ENCODE measurements at regions of chr16 and their contacts with region 1.

Region 1: GRCh38 chr16:15643048-15643945 is at the start of gene MARF1:
- DNase-seq: peak; percentile 99
- ATAC-seq: peak; percentile 94 to 99 (median 99)
- H3K4me3 ChIP-seq: peak within 1 kb of the TSS; percentile 69 to 97 (median 82)
- H3K27ac ChIP-seq: peak within 1 kb of the TSS; percentile 97 to 100 (median 99)
- H3K4me1 ChIP-seq: peaks cover 6 to 46% (median 20%) of the 10 kb centered on the region in 12 donors
- H3K27me3 ChIP-seq: no peaks in the 10 kb centered on the region
- CTCF ChIP-seq: peak; percentile 23 to 71 (median 45)
- POLR2A ChIP-seq: peak; percentile 67 to 95
- total RNA-seq, gene MARF1: 24.1 to 61.3 (median 43.1) TPM

Region 2: DNA sequence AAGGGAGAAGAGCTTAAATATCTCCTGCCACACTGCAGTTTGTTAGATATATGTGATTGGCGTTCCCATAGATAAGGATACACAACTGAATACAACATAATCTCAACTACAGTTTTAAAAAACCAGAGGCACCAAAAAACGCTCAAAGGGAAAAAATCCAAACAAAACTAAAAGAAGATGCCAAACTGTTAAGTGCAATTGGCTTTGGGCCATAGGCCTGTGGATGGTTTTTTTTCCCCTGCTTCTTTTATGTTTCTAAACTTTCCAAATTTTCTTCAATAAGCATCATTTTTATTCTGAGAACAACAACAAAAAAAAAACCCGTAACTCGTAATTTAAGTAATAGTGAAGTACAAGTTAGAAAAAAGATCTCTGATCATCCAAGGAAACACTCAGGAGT is 22.5 kb before region 1 on chr16:
- intact Hi-C with region 1: loop called in 1 of 10 experiments (anchors 2 kb)
- DNase-seq: no peak
- ATAC-seq: no peak
- H3K4me3 ChIP-seq: no peak overlapping the region
- H3K27ac ChIP-seq: peak overlapping the region in 11 of 12 donors; percentile 2 to 80 (median 58)
- H3K4me1 ChIP-seq: peaks cover 0 to 21% (median 13%) of the 10 kb centered on the region in 12 donors
- H3K27me3 ChIP-seq: no peaks in the 10 kb centered on the region
- CTCF ChIP-seq: no peak
- POLR2A ChIP-seq: no peak

Region 3: GRCh38 chr16:15672514-15673167 is 29.3 kb after region 1 on chr16:
- intact Hi-C with region 1: loop called in 4 of 10 experiments (anchors 1 to 2 kb)
- DNase-seq: peak; percentile 89 to 93 (median 90)
- ATAC-seq: peak; percentile 94 to 98 (median 98)
- H3K4me3 ChIP-seq: peak overlapping the region in 9 of 12 donors; percentile 4 to 41 (median 28)
- H3K27ac ChIP-seq: peak overlapping the region; percentile 72 to 97 (median 88)
- H3K4me1 ChIP-seq: peaks cover 0 to 38% (median 18%) of the 10 kb centered on the region in 12 donors
- H3K27me3 ChIP-seq: no peaks in the 10 kb centered on the region
- CTCF ChIP-seq: no peak
- POLR2A ChIP-seq: peak in 1 of 2 donors; percentile 53

Region 4: DNA sequence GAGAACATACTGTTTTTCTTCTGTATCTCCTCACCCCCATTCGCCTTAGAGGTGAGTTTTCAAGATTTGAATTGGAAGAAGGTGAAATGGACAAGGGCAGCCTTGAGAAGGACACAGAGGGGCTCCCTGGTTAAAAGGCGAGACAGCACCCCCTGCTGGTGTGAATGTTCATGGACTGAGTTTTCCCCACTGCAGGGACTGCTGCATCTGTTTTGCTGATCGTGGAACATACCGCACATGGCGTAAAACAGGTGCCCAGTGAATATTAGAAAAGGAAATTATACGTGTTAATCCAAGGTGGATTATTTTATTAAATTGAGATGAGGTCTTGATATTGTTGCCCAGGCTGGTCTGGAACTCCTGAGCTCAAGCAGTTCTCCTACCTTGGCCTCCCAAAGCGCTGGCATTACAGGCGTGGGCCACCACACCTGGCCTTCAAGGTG is 61.3 kb after region 1 on chr16:
- intact Hi-C with region 1: loop called in 5 of 10 experiments (anchors 2 to 10 kb)
- DNase-seq: peak; percentile 71 to 81 (median 73)
- ATAC-seq: peak; percentile 50 to 90 (median 82)
- H3K4me3 ChIP-seq: no peak overlapping the region
- H3K27ac ChIP-seq: peak overlapping the region in 1 of 12 donors; percentile 38
- H3K4me1 ChIP-seq: peaks cover 0 to 4% (median 0%) of the 10 kb centered on the region in 12 donors
- H3K27me3 ChIP-seq: no peaks in the 10 kb centered on the region
- CTCF ChIP-seq: peak; percentile 68 to 86 (median 80)
- POLR2A ChIP-seq: no peak

Region 5: GRCh38 chr16:15835136-15835878 is 192.0 kb after region 1 on chr16:
- intact Hi-C with region 1: no loop called
- DNase-seq: no peak
- ATAC-seq: no peak
- H3K4me3 ChIP-seq: no peak overlapping the region
- H3K27ac ChIP-seq: peak overlapping the region in 1 of 12 donors; percentile 87
- H3K4me1 ChIP-seq: peaks cover 0 to 5% (median 0%) of the 10 kb centered on the region in 12 donors
- H3K27me3 ChIP-seq: peaks cover 0 to 2% (median 0%) of the 10 kb centered on the region in 9 donors
- CTCF ChIP-seq: no peak
- POLR2A ChIP-seq: no peak

Region 6: GRCh38 chr16:15919331-15919730 is 276.0 kb after region 1 on chr16:
- intact Hi-C with region 1: no loop called
- DNase-seq: no peak
- ATAC-seq: no peak
- H3K4me3 ChIP-seq: no peak overlapping the region
- H3K27ac ChIP-seq: no peak overlapping the region
- H3K4me1 ChIP-seq: no peaks in the 10 kb centered on the region
- H3K27me3 ChIP-seq: no peaks in the 10 kb centered on the region
- CTCF ChIP-seq: no peak
- POLR2A ChIP-seq: no peak

Measured in heart left ventricle (tissue), 16 donors.